ENCODE measurements at regions of chr19 and their contacts with region 1.

Region 1: DNA sequence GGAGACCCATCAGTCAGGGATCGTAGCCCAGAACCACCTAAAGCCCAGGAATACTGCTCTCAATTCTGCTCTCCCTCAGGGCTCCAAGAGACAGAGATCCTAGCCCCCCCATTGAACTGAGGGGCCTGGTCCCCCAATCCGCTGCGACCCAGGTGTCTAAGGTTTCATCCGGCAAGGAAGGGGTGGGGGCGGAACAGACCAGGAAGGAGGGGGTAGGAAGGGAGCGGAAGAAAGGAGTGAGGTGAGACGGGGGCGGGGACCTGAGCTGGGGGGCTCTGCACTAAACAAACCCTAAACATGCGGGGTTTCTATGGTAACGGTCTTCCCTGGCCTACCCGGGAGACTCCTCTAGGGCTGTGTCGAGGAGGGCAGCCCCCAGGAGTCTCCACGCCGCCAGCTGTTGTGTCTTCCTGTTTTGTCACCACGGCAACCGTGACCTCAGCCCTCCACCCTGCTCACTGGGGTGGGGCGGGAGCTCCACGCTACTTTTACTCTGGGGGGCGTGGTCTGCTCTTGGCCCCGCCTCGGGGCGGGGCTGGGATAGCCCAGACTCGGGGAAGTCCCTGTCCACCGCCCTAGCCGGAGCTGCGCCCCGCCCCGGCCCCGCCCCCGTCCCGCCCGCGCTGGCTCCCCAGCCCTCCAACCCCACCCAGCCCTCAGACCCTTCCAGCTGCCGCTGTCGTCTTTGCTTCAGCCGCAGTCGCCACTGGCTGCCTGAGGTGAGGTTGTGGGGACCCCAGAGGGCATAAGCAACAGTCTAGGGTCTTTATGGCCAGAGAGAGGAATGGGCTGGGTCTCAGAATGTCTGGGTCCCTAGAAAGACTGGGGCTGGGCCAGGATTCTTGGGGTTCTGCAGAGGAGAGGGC is at the start of gene MYADM:
- DNase-seq: peak; percentile 100
- ATAC-seq: peak; percentile 61
- H3K4me3 Mint-ChIP-seq: peak within 1 kb of the TSS; percentile 98
- H3K27ac Mint-ChIP-seq: peak within 1 kb of the TSS; percentile 94
- H3K4me1 Mint-ChIP-seq: peaks cover 30% of the 10 kb centered on the region
- H3K27me3 Mint-ChIP-seq: no peaks in the 10 kb centered on the region
- total RNA-seq, gene MYADM: 76.3 to 77.3 TPM

Region 2: GRCh38 chr19:53853707-53854106 is 13.8 kb before region 1 on chr19:
- POLR2A ChIA-PET with region 1: interaction called, 32 read pairs
- DNase-seq: no peak
- ATAC-seq: peak; percentile 48
- H3K4me3 Mint-ChIP-seq: no peak overlapping the region
- H3K27ac Mint-ChIP-seq: no peak overlapping the region
- H3K4me1 Mint-ChIP-seq: peaks cover 14% of the 10 kb centered on the region
- H3K27me3 Mint-ChIP-seq: peaks cover 21% of the 10 kb centered on the region

Region 3: GRCh38 chr19:53879140-53880081 is 12.0 kb after region 1 on chr19:
- POLR2A ChIA-PET with region 1: interaction called, 19 read pairs
- DNase-seq: peak; percentile 91
- ATAC-seq: peak; percentile 90
- H3K4me3 Mint-ChIP-seq: no peak overlapping the region
- H3K27ac Mint-ChIP-seq: no peak overlapping the region
- H3K4me1 Mint-ChIP-seq: peaks cover 22% of the 10 kb centered on the region
- H3K27me3 Mint-ChIP-seq: peaks cover 15% of the 10 kb centered on the region

Measured in activated naive CD8-positive, alpha-beta T cell treated with anti-CD3 and anti-CD28 coated beads, Interleukin-2, amount 10 ng/mL, durations not matched to agents 7 days and 5 days (primary cell).